Activated CD4-positive, alpha-beta memory T cell treated with anti-CD3 and anti-CD28 coated beads for 36 hours (primary cell): ENCODE measurements at regions of chr12 and their contacts with region 1.

Region 1: GRCh38 chr12:19288603-19289244 is 150.6 kb upstream of the AEBP2 start:
- DNase-seq: no peak
- H3K4me3 Mint-ChIP-seq: no peak overlapping the region
- H3K27ac Mint-ChIP-seq: no peak overlapping the region
- H3K4me1 Mint-ChIP-seq: no peaks in the 10 kb centered on the region
- H3K27me3 Mint-ChIP-seq: no peaks in the 10 kb centered on the region

Region 2: GRCh38 chr12:18861287-18861858 is 427.4 kb before region 1 on chr12:
- CTCF ChIA-PET with region 1: no interaction called
- POLR2A ChIA-PET with region 1: no interaction called
- intact Hi-C with region 1: loop called (anchors 2 kb)
- DNase-seq: no peak
- H3K4me3 Mint-ChIP-seq: no peak overlapping the region
- H3K27ac Mint-ChIP-seq: no peak overlapping the region
- H3K4me1 Mint-ChIP-seq: no peaks in the 10 kb centered on the region
- H3K27me3 Mint-ChIP-seq: peaks cover 7% of the 10 kb centered on the region